ENCODE measurements at regions of chr15 and their contacts with region 1.

Region 1: DNA sequence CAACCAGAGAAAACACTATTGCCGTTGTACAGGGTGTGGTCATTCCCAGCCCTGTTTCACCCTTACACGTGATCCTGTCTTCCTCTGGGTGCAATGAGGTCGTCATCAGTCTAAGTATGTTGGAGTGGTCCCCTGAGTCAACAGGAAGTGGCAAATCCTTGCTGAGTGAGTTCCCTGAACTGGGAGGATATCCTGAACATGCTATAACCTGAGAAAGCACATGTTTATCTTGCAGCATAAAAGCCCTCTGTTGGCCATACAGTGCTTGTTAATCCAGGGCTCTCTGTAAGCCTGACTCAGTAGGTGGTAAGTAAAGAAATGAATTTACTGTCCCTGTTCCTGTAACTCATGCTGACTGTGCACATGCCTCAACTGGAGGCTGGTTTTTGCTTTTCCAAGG is 477.8 kb upstream of the RGMA start:
- DNase-seq: peak; percentile 97
- H3K4me3 ChIP-seq: no peak overlapping the region
- H3K27ac ChIP-seq: peak overlapping the region; percentile 86
- H3K4me1 ChIP-seq: peaks cover 14% of the 10 kb centered on the region
- H3K27me3 ChIP-seq: no peaks in the 10 kb centered on the region
- CTCF ChIP-seq: peak; percentile 36 to 49

Region 2: DNA sequence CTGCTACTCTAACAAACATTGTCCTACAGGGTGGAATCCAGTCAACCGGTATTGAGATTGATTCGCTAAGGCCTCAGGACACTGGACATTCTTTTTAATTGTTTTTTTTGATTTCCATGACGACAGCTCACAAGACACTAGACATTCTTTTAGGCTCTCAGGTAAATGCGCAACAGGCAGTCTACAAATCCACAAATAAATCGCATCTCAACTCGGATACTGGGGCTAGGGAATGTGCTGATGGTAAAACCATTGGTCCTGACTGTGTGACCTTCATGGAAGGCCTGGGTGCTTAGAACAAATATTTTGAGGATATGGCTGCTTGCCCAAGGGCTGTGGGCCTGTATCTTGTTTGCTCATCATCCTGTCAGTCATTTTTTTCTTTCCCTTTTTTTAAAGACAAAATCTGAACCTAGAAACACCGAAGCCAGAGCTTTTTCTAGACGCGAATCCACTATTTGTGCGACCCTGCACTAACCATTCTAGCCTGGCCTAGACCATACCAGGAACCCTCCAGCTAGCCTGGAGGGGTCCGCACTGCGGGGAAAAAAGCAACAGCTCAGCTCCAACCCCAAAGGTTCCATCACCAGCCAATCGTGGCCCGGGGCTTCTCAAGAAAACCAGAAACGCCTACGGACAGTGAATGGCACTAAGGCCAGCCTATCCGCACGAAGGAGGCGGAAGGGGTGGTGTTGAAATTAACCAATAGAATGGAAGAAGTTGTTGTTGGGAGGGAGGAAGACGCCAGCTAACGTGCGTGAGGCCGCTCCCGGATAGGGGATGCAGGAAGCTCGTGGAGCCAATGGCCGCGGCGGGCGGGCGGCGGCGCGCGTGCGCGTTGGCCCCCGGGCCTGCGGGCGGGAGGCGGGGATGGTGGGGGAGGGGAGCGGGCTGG is 684.7 kb before region 1 on chr15:
- CTCF ChIA-PET with region 1: no interaction called
- dilution Hi-C with region 1: no loop called
- in situ Hi-C with region 1: no loop called
- intact Hi-C with region 1: loop called (anchors 10 kb)
- DNase-seq: peak; percentile 100
- H3K4me3 ChIP-seq: peak overlapping the region; percentile 44 to 51 (median 48)
- H3K27ac ChIP-seq: peak overlapping the region; percentile 95
- H3K4me1 ChIP-seq: peaks cover 15% of the 10 kb centered on the region
- H3K27me3 ChIP-seq: no peaks in the 10 kb centered on the region
- CTCF ChIP-seq: no peak

Region 3: DNA sequence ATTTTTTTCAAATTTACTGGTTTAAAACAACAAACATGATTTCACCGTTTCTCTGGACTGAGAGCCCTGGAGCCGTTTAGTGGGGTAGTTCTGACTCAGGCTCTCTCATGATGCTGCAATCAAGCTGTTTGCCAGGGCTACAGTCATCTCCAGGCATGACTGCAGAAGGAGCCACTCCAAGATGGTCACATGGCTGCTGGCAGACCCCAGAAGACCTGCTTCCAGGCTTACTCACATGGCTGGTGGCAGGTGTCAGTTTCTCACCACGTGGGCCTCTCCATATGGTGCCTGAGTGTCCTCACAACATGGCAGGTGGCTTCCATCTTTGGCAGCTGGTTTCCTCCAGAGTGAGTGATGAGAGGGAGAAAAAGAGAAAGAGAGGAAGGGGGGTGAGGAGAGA is 99.4 kb before region 1 on chr15:
- CTCF ChIA-PET with region 1: no interaction called
- dilution Hi-C with region 1: no loop called
- in situ Hi-C with region 1: no loop called
- intact Hi-C with region 1: loop called (anchors 5 kb)
- DNase-seq: peak; percentile 77
- H3K4me3 ChIP-seq: no peak overlapping the region
- H3K27ac ChIP-seq: no peak overlapping the region
- H3K4me1 ChIP-seq: no peaks in the 10 kb centered on the region
- H3K27me3 ChIP-seq: no peaks in the 10 kb centered on the region
- CTCF ChIP-seq: no peak

Region 4: GRCh38 chr15:93495799-93496637 is 70.7 kb before region 1 on chr15:
- CTCF ChIA-PET with region 1: no interaction called
- dilution Hi-C with region 1: no loop called
- in situ Hi-C with region 1: no loop called
- intact Hi-C with region 1: loop called (anchors 2 kb)
- DNase-seq: peak; percentile 12
- H3K4me3 ChIP-seq: no peak overlapping the region
- H3K27ac ChIP-seq: no peak overlapping the region
- H3K4me1 ChIP-seq: peaks cover 9% of the 10 kb centered on the region
- H3K27me3 ChIP-seq: no peaks in the 10 kb centered on the region
- CTCF ChIP-seq: no peak

Region 5: GRCh38 chr15:93553167-93553935 is 13.4 kb before region 1 on chr15:
- CTCF ChIA-PET with region 1: no interaction called
- dilution Hi-C with region 1: no loop called
- in situ Hi-C with region 1: no loop called
- intact Hi-C with region 1: no loop called
- DNase-seq: no peak
- H3K4me3 ChIP-seq: no peak overlapping the region
- H3K27ac ChIP-seq: no peak overlapping the region
- H3K4me1 ChIP-seq: no peaks in the 10 kb centered on the region
- H3K27me3 ChIP-seq: no peaks in the 10 kb centered on the region
- CTCF ChIP-seq: no peak

Region 6: DNA sequence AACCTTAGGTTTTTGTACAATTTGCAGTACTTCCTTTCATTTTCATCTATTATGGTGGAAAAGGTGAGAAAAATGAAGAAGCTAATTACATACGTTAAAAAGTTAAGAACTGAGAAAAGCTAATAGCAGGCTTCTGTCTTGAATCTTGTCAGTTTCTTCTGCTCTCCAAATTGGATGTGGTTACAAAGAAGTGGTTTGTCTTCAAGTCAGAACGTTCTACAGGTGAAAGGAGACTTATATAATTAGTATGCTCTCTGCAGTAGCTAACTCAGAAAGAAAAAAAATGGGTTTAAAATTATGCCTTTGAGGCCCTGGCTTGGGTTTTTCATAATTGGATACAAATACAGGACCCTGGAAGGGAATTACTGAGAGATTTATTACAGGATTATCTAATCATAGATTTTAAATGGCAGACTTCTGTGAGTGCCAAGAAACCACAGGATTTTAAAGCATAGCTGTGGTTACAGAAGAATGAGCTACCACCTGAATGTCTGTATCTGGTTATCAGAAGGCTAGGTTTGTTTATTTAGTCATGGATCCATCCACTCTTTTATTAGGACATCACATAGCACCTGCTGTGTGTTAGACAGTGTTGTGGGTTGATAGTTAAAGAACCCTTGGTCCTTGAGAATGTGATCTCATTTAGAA is 136.5 kb after region 1 on chr15:
- CTCF ChIA-PET with region 1: no interaction called
- dilution Hi-C with region 1: no loop called
- in situ Hi-C with region 1: no loop called
- intact Hi-C with region 1: loop called (anchors 10 kb)
- DNase-seq: peak; percentile 46
- H3K4me3 ChIP-seq: no peak overlapping the region
- H3K27ac ChIP-seq: no peak overlapping the region
- H3K4me1 ChIP-seq: peaks cover 10% of the 10 kb centered on the region
- H3K27me3 ChIP-seq: no peaks in the 10 kb centered on the region
- CTCF ChIP-seq: no peak

Region 7: GRCh38 chr15:93771196-93772030 is 204.7 kb after region 1 on chr15:
- CTCF ChIA-PET with region 1: no interaction called
- dilution Hi-C with region 1: no loop called
- in situ Hi-C with region 1: no loop called
- intact Hi-C with region 1: loop called (anchors 10 kb)
- DNase-seq: peak; percentile 84
- H3K4me3 ChIP-seq: no peak overlapping the region
- H3K27ac ChIP-seq: no peak overlapping the region
- H3K4me1 ChIP-seq: peaks cover 24% of the 10 kb centered on the region
- H3K27me3 ChIP-seq: no peaks in the 10 kb centered on the region
- CTCF ChIP-seq: no peak

Region 8: DNA sequence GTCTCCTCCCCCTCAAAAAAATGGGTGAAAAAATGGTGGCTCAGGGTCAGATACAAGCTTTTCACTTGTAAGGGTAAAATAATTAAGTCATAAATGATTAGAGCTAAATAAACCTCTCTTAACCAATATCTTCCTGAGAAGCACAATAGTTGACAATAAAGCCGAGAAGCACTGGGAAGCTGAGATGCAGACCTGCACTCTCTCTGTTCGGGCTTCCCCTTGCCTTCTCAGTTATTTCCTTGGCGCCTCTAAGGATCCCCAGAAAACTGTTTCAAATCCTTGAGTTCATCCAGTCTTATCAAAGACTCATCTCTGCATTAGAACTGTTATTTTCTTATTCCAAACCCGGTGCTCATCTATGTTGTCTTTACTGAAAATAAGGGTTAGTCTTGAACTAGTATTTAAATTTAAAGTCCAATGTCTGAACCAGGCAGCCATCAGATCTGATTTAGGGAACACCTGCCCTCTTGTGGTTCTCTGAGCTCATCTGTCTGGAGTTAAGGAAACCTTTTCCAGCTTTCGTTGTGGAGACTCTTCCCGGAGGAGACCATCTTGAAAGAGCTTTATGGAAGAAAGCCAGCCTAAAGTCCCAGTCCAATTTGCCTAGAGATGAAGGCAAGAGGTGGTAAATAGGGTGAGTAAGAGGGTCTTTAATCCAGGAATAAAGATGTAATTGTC is 408.2 kb after region 1 on chr15:
- CTCF ChIA-PET with region 1: no interaction called
- dilution Hi-C with region 1: no loop called
- in situ Hi-C with region 1: no loop called
- intact Hi-C with region 1: loop called (anchors 1 kb)
- DNase-seq: peak; percentile 33
- H3K4me3 ChIP-seq: no peak overlapping the region
- H3K27ac ChIP-seq: no peak overlapping the region
- H3K4me1 ChIP-seq: no peaks in the 10 kb centered on the region
- H3K27me3 ChIP-seq: no peaks in the 10 kb centered on the region
- CTCF ChIP-seq: peak; percentile 48 to 77